GM10248 (cell line): ENCODE measurements at regions of chr1 and their contacts with region 1.

Region 1: DNA sequence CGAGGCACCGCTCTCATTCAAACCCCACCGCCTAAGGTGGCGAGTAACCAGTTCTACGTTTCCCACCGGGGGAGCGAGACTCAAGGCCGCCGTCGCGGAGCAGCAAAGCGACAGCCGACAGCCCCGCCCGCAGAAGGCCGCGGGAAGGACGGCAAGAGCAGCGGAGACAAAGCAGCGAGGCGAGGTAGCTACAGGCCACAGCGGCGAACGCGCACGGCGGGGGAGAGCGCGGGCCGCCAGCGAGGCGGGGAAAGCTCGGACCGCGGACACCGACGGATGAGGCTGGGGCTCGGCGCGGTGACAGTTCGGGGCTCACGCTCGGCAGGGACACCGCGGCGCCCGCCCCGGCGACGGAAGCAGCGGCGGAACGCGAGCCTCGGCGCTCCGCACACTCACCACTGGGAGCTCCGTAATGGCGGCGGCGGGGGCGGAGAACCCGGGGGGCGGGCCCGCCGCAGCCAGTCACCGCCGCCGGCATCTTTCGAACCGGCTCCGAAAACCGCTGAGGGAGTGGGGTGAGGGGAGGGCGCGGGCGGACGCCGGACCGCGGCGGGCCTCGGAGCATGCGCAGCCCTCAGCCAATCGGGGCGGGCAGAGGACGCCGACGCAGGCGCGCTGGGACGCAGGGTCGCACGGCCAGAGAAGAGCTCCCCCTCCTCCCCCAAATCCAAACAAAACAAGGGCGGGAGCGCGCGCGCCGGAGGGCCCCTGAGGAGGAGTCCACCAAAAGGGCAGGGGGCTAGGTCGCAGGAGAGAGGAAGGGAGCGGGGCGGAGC is 666 bp downstream of the HP1BP3 start:
- DNase-seq: peak; percentile 97
- CTCF ChIP-seq: no peak

Region 2: GRCh38 chr1:20574686-20575540 is 211.5 kb before region 1 on chr1:
- CTCF ChIA-PET with region 1: no interaction called
- POLR2A ChIA-PET with region 1: no interaction called
- DNase-seq: peak; percentile 82
- CTCF ChIP-seq: peak; percentile 59

Region 3: GRCh38 chr1:20775700-20776099 is 10.7 kb before region 1 on chr1:
- CTCF ChIA-PET with region 1: interaction called, 11 read pairs
- POLR2A ChIA-PET with region 1: no interaction called
- DNase-seq: no peak
- CTCF ChIP-seq: no peak